ENCODE measurements at regions of chr19 and their contacts with region 1.

Region 1: DNA sequence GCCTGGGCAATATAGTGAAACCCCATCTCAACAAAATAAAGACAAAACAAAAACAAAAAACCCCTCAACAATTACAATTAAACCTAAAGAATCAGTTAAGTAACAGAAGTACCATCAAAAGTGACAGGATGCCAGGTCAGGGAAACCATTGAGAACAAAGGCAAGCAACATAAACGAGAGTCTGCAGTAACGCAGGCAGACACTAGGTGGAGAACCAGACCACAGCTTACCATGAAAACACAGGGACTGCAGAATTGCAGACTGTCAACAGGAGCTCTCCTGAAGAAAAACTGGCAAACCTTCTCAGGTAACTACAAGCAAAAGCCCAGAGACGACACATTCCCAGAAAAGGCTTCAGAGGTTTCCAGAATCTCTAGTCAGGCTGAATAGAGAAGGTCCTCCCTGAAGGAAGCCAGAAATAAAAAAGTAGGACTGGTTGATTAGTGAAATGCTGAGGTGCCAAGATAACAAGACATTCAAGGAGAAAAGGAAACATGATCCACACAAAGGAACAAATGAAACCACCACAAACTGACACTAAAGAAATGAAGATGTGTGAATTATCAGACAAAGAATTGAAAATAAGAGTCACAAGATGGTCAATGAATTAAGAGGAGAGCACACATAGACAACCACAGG is 2.2 kb upstream of the ZNF665 start:
- DNase-seq: peak; percentile 76 to 94 (median 81)
- H3K4me3 ChIP-seq: no peak overlapping the region
- H3K27ac ChIP-seq: no peak overlapping the region
- H3K4me1 ChIP-seq: peaks cover 0 to 10% of the 10 kb centered on the region in 2 donors
- H3K27me3 ChIP-seq: no peaks in the 10 kb centered on the region
- CTCF ChIP-seq: peak; percentile 65 to 96 (median 91)
- POLR2A ChIP-seq: no peak

Region 2: DNA sequence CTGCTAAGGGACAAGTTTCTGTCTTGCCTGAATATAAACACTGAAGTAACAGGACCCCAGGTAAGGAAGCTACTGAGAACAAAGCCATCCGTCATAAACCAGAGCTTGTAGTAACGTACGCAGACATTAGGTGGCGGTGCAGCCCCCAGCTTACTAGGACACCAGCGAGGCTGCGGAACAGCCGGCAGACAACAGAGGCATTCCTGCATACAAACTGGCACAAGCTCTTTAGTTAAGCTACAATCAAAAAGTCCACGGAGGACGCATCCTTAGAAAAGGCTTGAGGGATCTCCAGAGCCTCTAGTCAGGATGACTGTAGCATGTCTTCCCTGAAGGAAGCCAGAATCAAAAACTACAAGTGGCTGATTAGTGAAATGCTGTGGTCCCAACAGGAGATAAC is 118.4 kb before region 1 on chr19:
- intact Hi-C with region 1: loop called in 1 of 2 experiments (anchors 10 kb)
- DNase-seq: peak; percentile 53 to 89 (median 82)
- H3K4me3 ChIP-seq: no peak overlapping the region
- H3K27ac ChIP-seq: no peak overlapping the region
- H3K4me1 ChIP-seq: no peaks in the 10 kb centered on the region
- H3K27me3 ChIP-seq: no peaks in the 10 kb centered on the region
- CTCF ChIP-seq: peak; percentile 59 to 85 (median 78)
- POLR2A ChIP-seq: no peak

Region 3: GRCh38 chr19:53365134-53365898 is 169.9 kb after region 1 on chr19 and contains the start of gene ZNF525:
- intact Hi-C with region 1: loop called in 1 of 2 experiments (anchors 10 kb)
- DNase-seq: peak; percentile 89 to 95 (median 93)
- H3K4me3 ChIP-seq: peak within 1 kb of the TSS in 3 of 4 donors; percentile 62 to 82 (median 78)
- H3K27ac ChIP-seq: peak within 1 kb of the TSS; percentile 6 to 84 (median 69)
- H3K4me1 ChIP-seq: peaks cover 5 to 8% of the 10 kb centered on the region in 2 donors
- H3K27me3 ChIP-seq: no peaks in the 10 kb centered on the region
- CTCF ChIP-seq: peak in 4 of 6 experiments; percentile 14 to 43 (median 27)
- POLR2A ChIP-seq: peak in 1 of 2 donors; percentile 47
- total RNA-seq, gene ZNF525: 3.0 to 22.5 (median 11.9) TPM

Region 4: GRCh38 chr19:53511933-53512374 is 316.6 kb after region 1 on chr19:
- intact Hi-C with region 1: loop called in 1 of 2 experiments (anchors 10 kb)
- DNase-seq: peak; percentile 36 to 82 (median 70)
- H3K4me3 ChIP-seq: no peak overlapping the region
- H3K27ac ChIP-seq: no peak overlapping the region
- H3K4me1 ChIP-seq: no peaks in the 10 kb centered on the region
- H3K27me3 ChIP-seq: no peaks in the 10 kb centered on the region
- CTCF ChIP-seq: peak; percentile 51 to 75 (median 62)
- POLR2A ChIP-seq: no peak

Measured in adrenal gland (tissue), 19 donors.